Adrenal gland (tissue), 19 donors: ENCODE measurements at regions of chr7 and their contacts with region 1.

Region 1: GRCh38 chr7:24665564-24666294 is 91.5 kb downstream of the GSDME start:
- DNase-seq: peak in 6 of 7 donors; percentile 20 to 57 (median 46)
- H3K4me3 ChIP-seq: no peak overlapping the region
- H3K27ac ChIP-seq: no peak overlapping the region
- H3K4me1 ChIP-seq: peaks cover 14 to 16% of the 10 kb centered on the region in 2 donors
- H3K27me3 ChIP-seq: no peaks in the 10 kb centered on the region
- CTCF ChIP-seq: peak; percentile 53 to 76 (median 66)
- POLR2A ChIP-seq: no peak

Region 2: GRCh38 chr7:24463474-24463873 is 202.3 kb before region 1 on chr7:
- intact Hi-C with region 1: no loop called
- DNase-seq: no peak
- H3K4me3 ChIP-seq: no peak overlapping the region
- H3K27ac ChIP-seq: no peak overlapping the region
- H3K4me1 ChIP-seq: no peaks in the 10 kb centered on the region
- H3K27me3 ChIP-seq: no peaks in the 10 kb centered on the region
- CTCF ChIP-seq: no peak
- POLR2A ChIP-seq: no peak

Region 3: DNA sequence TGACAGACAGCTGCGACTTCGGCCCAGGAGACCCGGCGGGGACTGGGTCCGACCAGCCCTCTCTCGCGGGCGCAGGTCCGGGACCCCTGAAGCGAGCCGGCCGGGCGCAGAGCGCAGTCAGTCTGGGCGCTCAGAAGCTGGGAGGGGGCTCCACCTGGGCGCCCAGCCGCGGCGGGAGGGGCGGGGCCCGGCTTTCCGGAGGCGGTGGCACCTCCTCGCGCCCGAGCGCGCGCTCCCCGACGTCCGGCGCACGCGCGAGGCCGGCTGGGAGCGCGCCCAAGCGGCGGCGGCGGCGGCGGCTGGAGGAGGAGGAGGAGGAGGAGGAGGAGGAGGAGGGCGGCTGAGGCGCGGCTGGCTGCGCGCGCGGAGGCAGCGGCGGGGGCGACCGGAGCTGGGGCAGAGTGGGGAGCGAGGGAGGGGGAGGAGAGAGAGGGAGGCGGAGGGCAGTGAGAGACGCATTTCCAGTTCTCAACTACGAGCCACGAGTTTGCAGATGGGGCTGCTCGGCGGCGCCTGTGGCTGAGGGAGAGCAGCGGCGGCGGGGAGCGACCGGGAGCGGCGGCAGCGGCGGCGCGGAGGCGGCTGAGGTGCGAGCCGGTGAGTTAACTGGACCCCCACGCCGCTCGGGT is 92.6 kb before region 1 on chr7 and contains the start of gene PALS2:
- intact Hi-C with region 1: loop called in 1 of 2 experiments (anchors 5 kb)
- DNase-seq: peak; percentile 57 to 86 (median 75)
- H3K4me3 ChIP-seq: peak within 1 kb of the TSS in 3 of 4 donors; percentile 28 to 96 (median 50)
- H3K27ac ChIP-seq: peak within 1 kb of the TSS in 4 of 5 donors; percentile 62 to 93 (median 83)
- H3K4me1 ChIP-seq: peaks cover 0 to 18% of the 10 kb centered on the region in 2 donors
- H3K27me3 ChIP-seq: no peaks in the 10 kb centered on the region
- CTCF ChIP-seq: no peak
- POLR2A ChIP-seq: peak in 1 of 2 donors; percentile 39
- total RNA-seq, gene PALS2: 5.5 to 61.1 (median 15.1) TPM